ENCODE measurements at regions of chr2 and their contacts with region 1.

Region 1: DNA sequence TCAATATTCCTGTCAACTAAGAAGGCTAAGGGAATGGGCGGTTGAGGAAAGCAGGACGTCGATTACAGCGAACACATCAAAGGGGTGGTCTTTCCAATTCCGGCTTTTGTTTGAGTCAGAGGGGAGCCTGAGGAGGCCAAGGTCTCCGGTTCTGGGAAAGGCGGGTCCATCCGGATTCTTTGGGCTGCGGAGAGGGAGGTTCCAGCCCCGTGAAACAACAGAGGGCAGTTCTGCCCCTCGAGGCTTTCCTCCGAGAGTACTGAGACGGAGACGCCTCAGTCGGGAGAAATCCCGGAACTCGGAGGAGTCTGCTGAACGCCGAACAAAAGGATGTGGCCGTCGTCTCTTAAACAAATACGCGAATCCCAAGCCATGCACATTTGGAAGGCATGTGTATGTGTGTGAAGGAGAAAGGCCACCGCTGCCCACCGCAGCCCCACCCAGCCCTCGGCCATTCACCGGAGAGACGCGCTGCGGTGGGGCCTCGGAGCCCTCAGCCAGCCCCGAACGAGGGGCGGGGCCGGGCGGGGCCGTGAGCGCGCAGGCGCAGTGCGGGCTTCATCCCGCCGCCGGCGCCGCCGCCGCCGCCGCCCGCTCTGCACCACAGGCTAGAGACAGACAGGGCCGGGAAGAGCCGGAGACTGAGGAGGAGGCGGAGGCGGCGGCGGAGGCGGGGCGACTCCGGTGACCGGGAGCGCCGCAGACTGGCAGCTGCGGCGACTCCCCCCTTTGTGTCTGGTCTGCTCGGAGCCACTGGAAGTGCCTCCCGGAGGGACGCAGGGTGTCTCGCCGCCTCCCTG is at the start of gene BMPR2:
- DNase-seq: peak; percentile 79
- H3K4me3 Mint-ChIP-seq: peak within 1 kb of the TSS; percentile 96
- H3K27ac Mint-ChIP-seq: peak within 1 kb of the TSS; percentile 71
- H3K4me1 Mint-ChIP-seq: peaks cover 20% of the 10 kb centered on the region
- H3K27me3 Mint-ChIP-seq: no peaks in the 10 kb centered on the region
- total RNA-seq, gene BMPR2: 4.2 to 5.5 TPM

Region 2: DNA sequence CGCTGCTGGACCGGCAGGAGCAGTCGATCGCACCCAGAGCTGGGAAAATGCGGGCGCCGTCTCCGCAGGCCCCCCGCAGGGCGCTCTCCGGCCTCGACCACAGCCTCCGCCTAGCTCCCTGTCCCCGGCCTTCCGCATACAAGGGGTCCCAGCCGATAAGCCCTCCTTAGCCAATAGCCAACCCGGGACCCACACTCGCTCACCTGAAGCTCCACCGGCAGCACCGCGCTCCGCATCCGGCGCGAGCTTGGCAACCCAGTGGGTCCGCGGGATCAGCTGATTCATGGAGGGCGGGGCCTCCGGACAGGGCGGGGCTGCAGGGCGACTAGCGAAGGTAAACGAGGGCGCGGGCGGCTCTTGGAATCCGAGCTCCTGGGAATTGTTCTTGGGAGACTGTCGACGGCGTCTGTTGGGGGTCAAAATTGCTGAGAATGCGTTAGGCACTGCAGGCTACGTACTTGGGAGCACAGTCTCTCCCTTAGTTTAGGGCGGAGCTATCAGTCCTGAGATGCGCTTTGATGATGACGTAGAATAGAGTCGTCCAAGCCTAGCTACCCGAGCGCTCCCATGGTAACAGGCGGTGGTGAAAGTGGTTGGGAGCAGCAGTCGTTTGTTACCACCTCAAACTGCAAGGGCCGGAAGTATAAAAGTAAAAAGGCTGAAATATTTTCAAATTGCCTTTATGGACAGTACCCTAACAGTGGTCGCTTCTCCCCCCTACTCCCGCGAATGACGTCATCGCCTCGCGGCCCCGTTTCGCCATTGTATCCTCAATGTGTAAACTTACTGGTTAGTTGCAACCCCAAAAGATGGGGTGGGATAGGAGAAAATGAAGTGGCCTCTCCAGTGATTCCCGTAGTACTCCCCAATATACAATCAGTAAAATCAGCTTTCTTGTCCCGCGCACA is 594.9 kb before region 1 on chr2 and contains the start of gene ALS2:
- CTCF ChIA-PET with region 1: no interaction called
- intact Hi-C with region 1: loop called (anchors 5 kb)
- DNase-seq: peak; percentile 96
- H3K4me3 Mint-ChIP-seq: peak within 1 kb of the TSS; percentile 86
- H3K27ac Mint-ChIP-seq: peak within 1 kb of the TSS; percentile 83
- H3K4me1 Mint-ChIP-seq: peaks cover 13% of the 10 kb centered on the region
- H3K27me3 Mint-ChIP-seq: peaks cover 3% of the 10 kb centered on the region
- total RNA-seq, gene ALS2: 9.4 to 11.2 TPM

Region 3: GRCh38 chr2:202109737-202110184 is 266.0 kb before region 1 on chr2:
- CTCF ChIA-PET with region 1: no interaction called
- intact Hi-C with region 1: no loop called
- DNase-seq: no peak
- H3K4me3 Mint-ChIP-seq: no peak overlapping the region
- H3K27ac Mint-ChIP-seq: no peak overlapping the region
- H3K4me1 Mint-ChIP-seq: no peaks in the 10 kb centered on the region
- H3K27me3 Mint-ChIP-seq: peaks cover 9% of the 10 kb centered on the region

Region 4: DNA sequence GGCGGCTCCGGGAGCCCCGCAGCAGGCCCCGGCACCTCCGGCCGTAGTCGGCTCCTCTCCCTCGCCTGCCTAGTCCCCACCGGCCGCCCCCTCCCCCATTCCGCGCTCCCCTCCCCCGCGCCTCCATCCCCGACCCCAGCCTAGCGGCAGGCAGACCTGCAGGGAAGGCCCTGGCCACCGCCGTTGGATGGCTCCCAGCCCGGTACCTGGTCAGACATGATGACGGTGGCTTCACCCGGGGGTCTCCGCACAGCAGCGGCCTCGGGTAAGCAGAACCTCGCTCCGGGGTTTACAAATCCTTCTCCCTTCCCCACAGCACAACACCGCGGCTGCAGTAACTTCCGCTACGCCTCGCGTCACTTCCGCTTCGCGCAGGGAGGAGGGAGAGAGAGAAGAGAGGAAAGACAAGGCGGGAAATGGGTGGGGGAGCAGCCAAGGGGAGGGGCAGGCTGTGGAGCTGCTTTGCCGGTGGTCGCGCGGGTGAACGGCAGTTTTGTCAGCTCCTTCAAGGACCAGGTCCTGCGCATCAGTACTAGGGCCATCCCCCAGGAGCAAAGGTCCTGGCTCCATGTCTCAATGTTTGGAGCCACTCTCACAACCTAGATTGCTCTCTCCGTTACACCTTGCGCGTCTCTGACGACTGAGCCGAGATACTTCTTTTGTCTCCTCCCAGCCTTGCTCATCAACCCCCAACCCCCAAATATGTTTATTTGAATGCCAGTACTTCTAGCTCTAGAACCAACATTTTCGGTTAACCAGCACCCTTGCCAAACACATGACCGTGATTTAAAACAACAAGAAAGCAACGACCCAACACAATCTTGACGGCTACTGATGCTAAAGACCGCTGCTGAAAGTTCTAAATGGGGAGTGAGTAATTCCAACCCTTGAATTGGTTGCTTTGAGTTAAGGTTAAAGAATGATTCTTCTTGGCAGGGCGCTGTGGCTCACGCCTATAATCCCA is 137.3 kb before region 1 on chr2 and contains the start of gene SUMO1:
- CTCF ChIA-PET with region 1: no interaction called
- intact Hi-C with region 1: loop called (anchors 1 kb)
- DNase-seq: peak; percentile 97
- H3K4me3 Mint-ChIP-seq: peak within 1 kb of the TSS; percentile 97
- H3K27ac Mint-ChIP-seq: peak within 1 kb of the TSS; percentile 91
- H3K4me1 Mint-ChIP-seq: peaks cover 31% of the 10 kb centered on the region
- H3K27me3 Mint-ChIP-seq: no peaks in the 10 kb centered on the region
- total RNA-seq, gene SUMO1: 131 to 132 TPM

Region 5: DNA sequence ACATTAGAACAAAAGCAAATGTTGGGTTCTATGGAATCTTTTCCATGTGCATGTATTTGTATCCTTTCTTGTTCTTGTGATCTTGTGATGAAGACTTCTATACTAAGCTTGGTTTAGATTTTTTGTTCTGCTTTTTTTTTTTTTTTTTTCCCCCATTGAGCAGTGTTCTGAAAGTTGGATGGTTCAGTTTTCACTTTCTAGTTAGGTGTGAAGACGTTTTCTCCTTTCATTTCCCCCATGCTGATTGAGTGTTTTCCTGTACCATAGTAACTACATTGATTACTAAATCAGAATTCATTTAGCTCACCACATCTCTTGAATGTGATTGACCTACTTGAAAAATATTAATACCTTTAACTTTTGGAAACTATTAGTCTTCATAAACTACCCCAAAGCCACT is 76.1 kb before region 1 on chr2:
- CTCF ChIA-PET with region 1: interaction called, 3 read pairs
- intact Hi-C with region 1: loop called (anchors 1 kb)
- DNase-seq: no peak
- H3K4me3 Mint-ChIP-seq: no peak overlapping the region
- H3K27ac Mint-ChIP-seq: peak overlapping the region; percentile 87
- H3K4me1 Mint-ChIP-seq: peaks cover 59% of the 10 kb centered on the region
- H3K27me3 Mint-ChIP-seq: no peaks in the 10 kb centered on the region

Region 6: GRCh38 chr2:202911512-202912341 is 535.9 kb after region 1 on chr2 and contains the starts of genes CARF and WDR12:
- CTCF ChIA-PET with region 1: no interaction called
- intact Hi-C with region 1: loop called (anchors 5 kb)
- DNase-seq: peak; percentile 95
- H3K4me3 Mint-ChIP-seq: peak within 1 kb of the TSS; percentile 87
- H3K27ac Mint-ChIP-seq: peak within 1 kb of the TSS; percentile 94
- H3K4me1 Mint-ChIP-seq: peaks cover 32% of the 10 kb centered on the region
- H3K27me3 Mint-ChIP-seq: no peaks in the 10 kb centered on the region
- total RNA-seq, gene CARF: 4.0 to 5.4 TPM
- total RNA-seq, gene WDR12: 83.0 to 98.3 TPM

Measured in activated naive CD4-positive, alpha-beta T cell treated with anti-CD3 and anti-CD28 coated beads for 36 hours (primary cell).